HAP-1 (cell line): ENCODE measurements at regions of chr9 and their contacts with region 1.

Region 1: DNA sequence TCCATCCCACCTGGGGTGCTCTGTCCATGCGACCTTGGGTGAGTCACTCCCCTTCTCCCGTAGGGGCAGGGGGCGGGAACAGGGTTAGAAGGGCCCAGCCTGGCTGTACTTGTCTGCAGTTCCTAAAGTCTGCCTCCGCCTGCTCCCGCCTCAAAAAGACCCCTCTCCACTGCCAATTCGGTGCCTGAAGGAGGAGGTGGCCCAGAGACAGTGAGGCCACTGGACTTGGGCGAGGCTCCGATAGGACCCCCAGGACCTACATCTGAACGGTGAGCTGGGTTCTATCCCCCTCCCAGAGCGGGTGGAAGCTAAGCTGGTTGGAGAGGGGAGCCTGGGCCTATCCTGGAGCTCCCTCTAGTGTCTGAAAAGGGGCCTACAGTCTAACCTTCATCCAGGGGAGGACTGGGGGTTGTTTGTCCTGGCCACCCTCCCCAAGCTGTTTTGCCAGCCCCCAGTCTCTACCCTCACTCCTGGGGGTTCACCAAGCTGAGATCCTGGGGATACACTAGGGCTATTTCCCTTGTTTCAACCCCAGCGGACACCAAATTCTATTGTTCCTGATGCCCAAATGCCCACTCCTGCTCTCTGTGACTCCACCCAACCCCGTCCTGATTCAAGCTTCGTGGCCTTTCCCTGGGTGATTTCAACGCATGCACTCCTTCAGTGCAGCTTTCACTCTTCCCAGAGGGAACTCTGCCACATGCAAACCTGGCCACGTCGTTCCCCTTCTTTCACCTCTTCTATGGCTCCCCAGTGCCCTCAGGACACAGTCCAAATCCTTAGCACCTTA is 6.1 kb upstream of the CRB2 start:
- DNase-seq: peak; percentile 72 to 82
- H3K4me3 ChIP-seq: no peak overlapping the region
- H3K4me1 ChIP-seq: no peaks in the 10 kb centered on the region
- H3K27me3 ChIP-seq: peaks cover 21% of the 10 kb centered on the region

Region 2: DNA sequence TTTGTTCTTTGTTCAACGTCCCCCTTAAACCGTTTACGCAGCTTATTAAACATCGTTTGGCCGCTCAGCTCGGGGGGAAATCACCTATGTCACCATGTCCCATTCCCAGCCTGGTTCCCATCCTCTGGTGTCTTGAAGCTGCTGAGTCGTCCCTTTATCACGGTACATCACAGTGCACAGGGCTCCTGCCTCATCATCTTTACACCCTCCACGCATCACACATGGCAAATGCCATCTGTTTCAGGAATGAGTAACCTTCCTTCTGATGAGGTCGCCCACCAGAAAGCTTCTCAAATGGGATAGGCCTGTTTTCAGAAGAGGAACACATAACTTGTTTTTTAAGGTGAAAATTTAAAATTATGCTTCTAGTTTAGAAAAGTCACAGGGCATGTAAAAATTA is 1113.2 kb before region 1 on chr9:
- in situ Hi-C with region 1: no loop called
- DNase-seq: no peak
- H3K4me3 ChIP-seq: no peak overlapping the region
- H3K4me1 ChIP-seq: peaks cover 3% of the 10 kb centered on the region
- H3K27me3 ChIP-seq: no peaks in the 10 kb centered on the region

Region 3: GRCh38 chr9:122464633-122465567 is 885.0 kb before region 1 on chr9:
- in situ Hi-C with region 1: loop called (anchors 25 kb)
- DNase-seq: peak; percentile 51 to 75
- H3K4me3 ChIP-seq: no peak overlapping the region
- H3K4me1 ChIP-seq: no peaks in the 10 kb centered on the region
- H3K27me3 ChIP-seq: peaks cover 7% of the 10 kb centered on the region

Region 4: DNA sequence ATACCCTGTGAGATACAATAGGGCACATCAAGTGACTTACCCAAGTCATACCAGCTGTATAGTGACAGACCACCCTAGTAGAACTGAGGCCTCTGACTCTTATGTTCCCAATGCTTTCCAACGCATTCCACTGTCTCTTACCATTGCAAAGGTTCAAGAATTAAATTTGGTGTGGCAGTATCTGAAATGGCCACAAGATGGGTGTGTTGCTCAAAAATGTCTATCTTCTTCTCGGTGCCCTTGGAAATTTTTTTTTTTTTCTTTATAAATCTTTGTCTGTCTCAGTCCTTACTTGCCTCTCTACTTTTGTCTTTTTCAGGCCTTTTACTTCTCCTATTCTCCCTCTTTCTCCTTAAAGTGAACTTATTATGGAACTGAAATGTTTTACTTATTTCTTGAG is 268.1 kb before region 1 on chr9:
- in situ Hi-C with region 1: loop called (anchors 5 kb)
- DNase-seq: peak; percentile 45 to 51
- H3K4me3 ChIP-seq: no peak overlapping the region
- H3K4me1 ChIP-seq: no peaks in the 10 kb centered on the region
- H3K27me3 ChIP-seq: no peaks in the 10 kb centered on the region

Region 5: DNA sequence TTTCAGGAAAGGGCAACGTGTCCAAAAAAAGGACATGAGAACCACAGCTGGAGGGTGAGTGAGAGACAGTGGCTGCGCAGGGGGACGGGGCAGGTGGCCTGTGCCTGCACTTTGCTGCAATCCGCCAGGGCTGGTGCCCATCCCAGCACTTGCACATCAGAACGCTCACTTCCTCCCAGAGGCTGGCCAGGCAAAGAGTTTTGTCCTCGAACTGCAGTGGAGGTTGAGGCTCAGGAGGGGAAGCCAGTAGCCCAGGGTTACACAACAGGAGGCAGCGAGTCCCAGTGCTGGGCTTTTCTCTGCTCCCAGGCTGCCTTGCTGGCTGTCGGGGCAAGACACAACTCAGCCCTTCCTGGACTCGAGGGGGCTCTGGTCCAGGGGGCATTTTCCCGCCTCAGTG is 39.2 kb after region 1 on chr9:
- in situ Hi-C with region 1: loop called (anchors 5 kb)
- DNase-seq: no peak
- H3K4me3 ChIP-seq: no peak overlapping the region
- H3K4me1 ChIP-seq: no peaks in the 10 kb centered on the region
- H3K27me3 ChIP-seq: no peaks in the 10 kb centered on the region